SK-N-SH (cell line): ENCODE measurements at regions of chr1 and their contacts with region 1.

Region 1: GRCh38 chr1:46223472-46223943 is 20.4 kb downstream of the LURAP1 start:
- DNase-seq: peak; percentile 78
- H3K4me3 ChIP-seq: peak overlapping the region in 1 of 2 experiments; percentile 2; a peak in 1 of 4 replicates
- H3K27ac ChIP-seq: no peak overlapping the region
- H3K4me1 ChIP-seq: no peaks in the 10 kb centered on the region; a peak in 1 of 4 replicates
- H3K27me3 ChIP-seq: no peaks in the 10 kb centered on the region
- CTCF ChIP-seq: peak; percentile 99
- EP300 ChIP-seq: no peak
- RAD21 ChIP-seq: peak; percentile 80

Region 2: DNA sequence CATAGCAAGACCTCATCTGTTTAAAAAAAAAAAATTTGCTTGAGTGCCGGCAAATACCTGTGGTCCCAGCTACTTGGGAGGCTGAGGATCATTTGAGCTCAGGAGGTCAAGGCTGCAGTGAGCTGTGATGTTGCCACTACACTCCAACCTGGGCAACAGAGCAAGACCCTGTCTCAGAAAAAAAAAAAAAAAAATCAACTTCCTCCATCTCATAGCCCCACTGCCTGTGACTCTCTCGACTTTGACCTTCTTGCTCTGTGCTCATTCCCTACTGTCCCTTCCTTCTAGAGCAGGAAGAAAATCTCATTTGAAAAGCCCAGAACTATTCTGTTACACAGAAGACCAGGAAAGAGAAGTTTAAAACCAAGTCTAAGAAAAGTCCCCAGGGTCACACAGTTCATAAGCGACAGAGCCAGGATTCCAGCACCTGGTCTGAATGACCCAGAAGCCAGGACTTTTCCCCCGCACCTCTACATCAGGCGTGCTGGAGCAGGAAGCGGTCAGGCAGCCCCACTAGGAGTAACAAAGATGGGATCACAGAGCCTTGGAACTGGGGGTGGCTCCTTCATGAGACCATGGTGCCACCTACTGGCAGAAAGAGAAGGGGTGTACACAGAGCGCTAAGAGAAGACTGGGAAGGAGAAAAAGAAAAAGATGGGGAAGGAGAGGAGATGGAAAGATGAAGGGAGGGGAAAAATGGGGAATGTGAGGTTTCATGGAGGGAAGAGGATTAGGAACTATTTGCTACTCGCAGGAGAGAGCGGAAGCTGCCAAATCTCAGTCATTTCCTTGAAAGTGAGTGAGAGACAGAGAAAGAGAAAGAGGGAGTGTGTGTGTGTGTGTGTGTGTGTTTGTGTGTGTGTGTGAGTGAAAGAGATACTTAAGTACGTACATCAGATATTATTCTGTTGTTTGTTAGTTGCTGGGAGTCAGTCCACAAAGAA is 44.1 kb before region 1 on chr1:
- CTCF ChIA-PET with region 1: interaction called, 17 read pairs
- POLR2A ChIA-PET with region 1: no interaction called
- DNase-seq: peak; percentile 92
- H3K4me3 ChIP-seq: peak overlapping the region in 1 of 2 experiments; percentile 50; a peak in 1 of 4 replicates
- H3K27ac ChIP-seq: no peak overlapping the region
- H3K4me1 ChIP-seq: peaks cover 23 to 26% of the 10 kb centered on the region in 2 experiments; a peak in 3 of 4 replicates
- H3K27me3 ChIP-seq: no peaks in the 10 kb centered on the region
- CTCF ChIP-seq: peak; percentile 94
- EP300 ChIP-seq: no peak
- RAD21 ChIP-seq: peak; percentile 98

Region 3: GRCh38 chr1:46203738-46204405 is 19.6 kb before region 1 on chr1:
- CTCF ChIA-PET with region 1: interaction called, 29 read pairs
- POLR2A ChIA-PET with region 1: no interaction called
- DNase-seq: peak; percentile 36
- H3K4me3 ChIP-seq: peak overlapping the region; percentile 67 to 98
- H3K27ac ChIP-seq: no peak overlapping the region
- H3K4me1 ChIP-seq: peaks cover 4 to 13% of the 10 kb centered on the region in 2 experiments; a peak in 1 of 4 replicates
- H3K27me3 ChIP-seq: no peaks in the 10 kb centered on the region
- CTCF ChIP-seq: no peak
- EP300 ChIP-seq: no peak
- RAD21 ChIP-seq: no peak

Region 4: DNA sequence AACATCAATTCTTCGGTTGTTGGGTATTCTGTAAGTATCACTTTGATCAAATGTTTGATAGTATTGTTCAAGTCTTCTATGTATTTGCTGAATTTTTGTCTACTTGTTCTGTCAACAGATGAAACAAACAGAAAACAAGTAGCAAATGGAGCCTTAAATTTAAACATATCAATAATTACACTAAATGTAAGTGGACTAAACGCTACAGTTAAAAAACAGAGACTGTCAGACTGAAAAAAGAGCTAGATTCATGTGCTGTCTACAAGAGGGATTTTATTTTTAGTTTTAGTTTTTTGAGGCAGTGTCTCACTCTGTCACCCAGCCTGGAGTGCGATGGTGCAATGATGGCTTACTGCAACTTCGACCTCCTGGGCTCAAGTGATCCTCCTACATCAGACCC is 13.4 kb after region 1 on chr1:
- CTCF ChIA-PET with region 1: interaction called, 26 read pairs
- POLR2A ChIA-PET with region 1: interaction called, 3 read pairs
- DNase-seq: no peak
- H3K4me3 ChIP-seq: no peak overlapping the region
- H3K27ac ChIP-seq: no peak overlapping the region
- H3K4me1 ChIP-seq: no peaks in the 10 kb centered on the region
- H3K27me3 ChIP-seq: no peaks in the 10 kb centered on the region
- CTCF ChIP-seq: no peak
- EP300 ChIP-seq: no peak
- RAD21 ChIP-seq: no peak